ENCODE measurements at regions of chr10 and their contacts with region 1.

Region 1: DNA sequence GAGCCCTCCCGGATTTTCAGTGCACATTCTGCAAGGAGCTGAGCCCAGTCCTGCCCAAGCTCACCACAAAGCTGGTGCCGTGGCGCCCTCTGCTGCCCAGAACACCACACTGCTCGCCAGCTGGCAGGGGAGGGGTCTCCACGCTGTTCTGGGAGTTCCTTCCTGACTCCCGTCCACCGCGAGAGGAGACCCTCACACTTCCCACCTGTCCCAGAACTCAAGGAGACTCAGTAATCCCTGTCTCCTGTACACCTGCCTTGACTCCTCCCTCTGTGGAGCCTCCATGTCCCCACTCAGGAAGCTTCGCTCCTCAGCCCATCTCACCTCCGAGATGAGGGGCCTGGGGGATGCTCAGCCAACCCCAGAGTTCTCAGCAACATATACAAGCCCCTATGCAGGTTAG is 11.3 kb downstream of the C10orf105 start:
- DNase-seq: peak; percentile 76 to 88
- H3K4me3 ChIP-seq: no peak overlapping the region
- H3K4me3 Mint-ChIP-seq: no peak overlapping the region
- H3K27ac Mint-ChIP-seq: peak overlapping the region; percentile 2
- H3K4me1 ChIP-seq: 0 out of 2 replicates have a peak, but pooled peaks cover under 1% of the 10 kb centered on the region
- H3K4me1 Mint-ChIP-seq: no peaks in the 10 kb centered on the region
- H3K27me3 ChIP-seq: no peaks in the 10 kb centered on the region
- H3K27me3 Mint-ChIP-seq: no peaks in the 10 kb centered on the region
- CTCF ChIP-seq: peak; percentile 97 to 98

Region 2: GRCh38 chr10:71383972-71384687 is 324.2 kb before region 1 on chr10:
- CTCF ChIA-PET with region 1: interaction called, 8 read pairs
- POLR2A ChIA-PET with region 1: no interaction called
- intact Hi-C with region 1: loop called (anchors 1 kb)
- DNase-seq: peak; percentile 80 to 89
- H3K4me3 ChIP-seq: no peak overlapping the region
- H3K4me3 Mint-ChIP-seq: no peak overlapping the region
- H3K27ac Mint-ChIP-seq: no peak overlapping the region
- H3K4me1 ChIP-seq: no peaks in the 10 kb centered on the region
- H3K4me1 Mint-ChIP-seq: no peaks in the 10 kb centered on the region
- H3K27me3 ChIP-seq: no peaks in the 10 kb centered on the region
- H3K27me3 Mint-ChIP-seq: peaks cover 6% of the 10 kb centered on the region
- CTCF ChIP-seq: peak; percentile 97 to 98

Region 3: DNA sequence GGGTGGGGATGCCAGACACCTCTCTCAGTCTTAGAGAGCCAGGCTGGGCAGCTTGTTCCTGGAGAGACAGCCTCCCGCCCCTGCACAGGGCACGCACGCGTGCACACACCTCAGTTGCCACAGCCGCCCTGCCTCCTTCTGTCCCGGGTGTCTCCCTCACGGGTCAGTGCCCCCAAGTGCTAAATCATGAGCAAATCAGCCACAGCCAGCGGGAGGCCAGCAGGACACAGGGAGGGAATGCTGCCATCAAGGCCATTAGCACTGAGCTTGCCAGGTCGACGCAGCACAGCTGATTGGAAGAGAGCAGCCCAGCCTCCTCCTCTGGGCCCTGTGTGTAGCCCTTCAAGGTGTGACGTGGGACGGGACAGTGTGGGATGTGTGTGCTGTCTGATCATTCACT is 181.2 kb before region 1 on chr10:
- CTCF ChIA-PET with region 1: interaction called, 3 read pairs
- POLR2A ChIA-PET with region 1: no interaction called
- intact Hi-C with region 1: loop called (anchors 1 kb)
- DNase-seq: no peak
- H3K4me3 ChIP-seq: no peak overlapping the region
- H3K4me3 Mint-ChIP-seq: no peak overlapping the region
- H3K27ac Mint-ChIP-seq: no peak overlapping the region
- H3K4me1 ChIP-seq: peaks cover 12% of the 10 kb centered on the region
- H3K4me1 Mint-ChIP-seq: no peaks in the 10 kb centered on the region
- H3K27me3 ChIP-seq: no peaks in the 10 kb centered on the region; the same call in 1 of the 2 replicates
- H3K27me3 Mint-ChIP-seq: no peaks in the 10 kb centered on the region
- CTCF ChIP-seq: no peak

Region 4: GRCh38 chr10:71771821-71772617 is 63.7 kb after region 1 on chr10:
- CTCF ChIA-PET with region 1: interaction called, 12 read pairs
- POLR2A ChIA-PET with region 1: no interaction called
- intact Hi-C with region 1: loop called (anchors 5 kb)
- DNase-seq: no peak
- H3K4me3 ChIP-seq: peak overlapping the region; percentile 56; the same call in 1 of the 2 replicates
- H3K4me3 Mint-ChIP-seq: peak overlapping the region; percentile 70
- H3K27ac Mint-ChIP-seq: peak overlapping the region; percentile 1
- H3K4me1 ChIP-seq: peaks cover 65% of the 10 kb centered on the region
- H3K4me1 Mint-ChIP-seq: peaks cover 27% of the 10 kb centered on the region
- H3K27me3 ChIP-seq: no peaks in the 10 kb centered on the region
- H3K27me3 Mint-ChIP-seq: no peaks in the 10 kb centered on the region
- CTCF ChIP-seq: no peak

Region 5: GRCh38 chr10:71812016-71812912 is 104.0 kb after region 1 on chr10:
- CTCF ChIA-PET with region 1: interaction called, 13 read pairs
- POLR2A ChIA-PET with region 1: no interaction called
- intact Hi-C with region 1: loop called (anchors 5 kb)
- DNase-seq: peak; percentile 74 to 91
- H3K4me3 ChIP-seq: no peak overlapping the region
- H3K4me3 Mint-ChIP-seq: no peak overlapping the region
- H3K27ac Mint-ChIP-seq: no peak overlapping the region
- H3K4me1 ChIP-seq: no peaks in the 10 kb centered on the region
- H3K4me1 Mint-ChIP-seq: peaks cover 7% of the 10 kb centered on the region
- H3K27me3 ChIP-seq: no peaks in the 10 kb centered on the region
- H3K27me3 Mint-ChIP-seq: no peaks in the 10 kb centered on the region
- CTCF ChIP-seq: peak; percentile 98